ENCODE measurements at regions of chr17 and their contacts with region 1.

Region 1: GRCh38 chr17:7403977-7404736 is at the start of gene TMEM256:
- DNase-seq: peak; percentile 98
- H3K4me3 ChIP-seq: peak within 1 kb of the TSS; percentile 57 to 86 (median 62)
- H3K4me3 Mint-ChIP-seq: peak within 1 kb of the TSS; percentile 86 to 95
- H3K27ac ChIP-seq: peak within 1 kb of the TSS; percentile 59 to 70
- H3K27ac Mint-ChIP-seq: peak within 1 kb of the TSS; percentile 88 to 99 (median 97)
- H3K4me1 ChIP-seq: peaks cover 13 to 24% of the 10 kb centered on the region in 2 donors
- H3K4me1 Mint-ChIP-seq: peaks cover 21% of the 10 kb centered on the region
- H3K27me3 ChIP-seq: peaks cover 4 to 33% of the 10 kb centered on the region in 2 donors
- H3K27me3 Mint-ChIP-seq: peaks cover 33 to 41% (median 34%) of the 10 kb centered on the region in 3 donors
- CTCF ChIP-seq: no peak
- polyA plus RNA-seq, gene TMEM256: 39.2 to 81.4 (median 72.6) TPM

Region 2: GRCh38 chr17:7214300-7215135 is 189.6 kb before region 1 on chr17:
- intact Hi-C with region 1: loop called in 1 of 2 experiments (anchors 10 kb)
- DNase-seq: peak; percentile 91 to 96 (median 92)
- H3K4me3 ChIP-seq: peak overlapping the region; percentile 46 to 83 (median 62)
- H3K4me3 Mint-ChIP-seq: peak overlapping the region; percentile 89 to 90
- H3K27ac ChIP-seq: peak overlapping the region; percentile 69 to 71
- H3K27ac Mint-ChIP-seq: peak overlapping the region; percentile 91 to 100 (median 99)
- H3K4me1 ChIP-seq: peaks cover 56 to 59% of the 10 kb centered on the region in 2 donors
- H3K4me1 Mint-ChIP-seq: peaks cover 66% of the 10 kb centered on the region
- H3K27me3 ChIP-seq: no peaks in the 10 kb centered on the region
- H3K27me3 Mint-ChIP-seq: peaks cover 1 to 11% (median 3%) of the 10 kb centered on the region in 3 donors
- CTCF ChIP-seq: peak; percentile 50

Region 3: GRCh38 chr17:7252176-7253043 is 151.7 kb before region 1 on chr17 and contains the start of gene ELP5:
- intact Hi-C with region 1: loop called in 1 of 2 experiments (anchors 5 kb)
- DNase-seq: peak; percentile 88 to 96 (median 93)
- H3K4me3 ChIP-seq: peak within 1 kb of the TSS; percentile 73 to 93 (median 87)
- H3K4me3 Mint-ChIP-seq: peak within 1 kb of the TSS; percentile 90 to 95
- H3K27ac ChIP-seq: peak within 1 kb of the TSS; percentile 100
- H3K27ac Mint-ChIP-seq: peak within 1 kb of the TSS; percentile 99 to 100 (median 100)
- H3K4me1 ChIP-seq: peaks cover 31 to 36% of the 10 kb centered on the region in 2 donors
- H3K4me1 Mint-ChIP-seq: peaks cover 34% of the 10 kb centered on the region
- H3K27me3 ChIP-seq: no peaks in the 10 kb centered on the region
- H3K27me3 Mint-ChIP-seq: no peaks in the 10 kb centered on the region
- CTCF ChIP-seq: peak; percentile 28
- polyA plus RNA-seq, gene ELP5: 36.1 to 49.5 (median 44.1) TPM

Region 4: DNA sequence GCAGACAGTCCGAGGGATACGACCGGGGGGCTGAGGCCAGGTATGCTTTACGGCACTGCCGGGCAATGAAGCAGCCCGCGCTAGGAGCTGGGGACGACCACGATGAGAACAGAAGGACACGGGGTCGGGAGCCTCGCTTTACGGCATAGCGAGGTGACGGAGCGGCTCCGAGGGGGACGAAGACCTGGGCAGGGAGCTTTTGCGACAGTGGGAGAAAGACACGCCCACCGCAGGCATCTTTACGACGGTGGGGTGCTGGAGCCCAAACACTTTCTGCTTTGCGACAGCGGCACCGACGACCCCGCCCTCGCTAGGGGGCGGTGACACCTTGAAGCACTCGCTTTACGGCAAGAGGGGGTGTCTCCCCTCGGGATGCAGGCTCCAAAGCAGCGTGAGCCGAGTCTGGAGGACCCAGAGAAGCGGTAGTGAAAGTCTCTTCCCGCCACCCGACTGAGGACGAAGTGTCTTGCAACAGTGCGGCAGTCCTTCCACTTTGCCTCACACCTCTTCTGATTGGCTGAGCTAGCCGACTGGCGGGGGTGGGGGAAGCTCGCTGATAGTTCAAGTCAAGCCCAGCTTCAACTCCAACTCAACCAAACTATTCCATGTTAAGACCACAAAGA is 74.7 kb before region 1 on chr17:
- intact Hi-C with region 1: loop called in 1 of 2 experiments (anchors 2 kb)
- DNase-seq: peak; percentile 92 to 100 (median 99)
- H3K4me3 ChIP-seq: peak overlapping the region; percentile 80 to 91 (median 81)
- H3K4me3 Mint-ChIP-seq: peak overlapping the region; percentile 91 to 98
- H3K27ac ChIP-seq: peak overlapping the region; percentile 92
- H3K27ac Mint-ChIP-seq: peak overlapping the region; percentile 96 to 100 (median 98)
- H3K4me1 ChIP-seq: peaks cover 34 to 39% of the 10 kb centered on the region in 2 donors
- H3K4me1 Mint-ChIP-seq: peaks cover 36% of the 10 kb centered on the region
- H3K27me3 ChIP-seq: no peaks in the 10 kb centered on the region
- H3K27me3 Mint-ChIP-seq: peaks cover 0 to 6% (median 0%) of the 10 kb centered on the region in 3 donors
- CTCF ChIP-seq: no peak

Region 5: GRCh38 chr17:7435221-7435675 is 31.1 kb after region 1 on chr17 and contains the start of gene TMEM102:
- intact Hi-C with region 1: loop called in 1 of 2 experiments (anchors 1 kb)
- DNase-seq: peak; percentile 97 to 98 (median 98)
- H3K4me3 ChIP-seq: peak within 1 kb of the TSS; percentile 77 to 95 (median 86)
- H3K4me3 Mint-ChIP-seq: peak within 1 kb of the TSS; percentile 86 to 94
- H3K27ac ChIP-seq: peak within 1 kb of the TSS; percentile 79 to 89
- H3K27ac Mint-ChIP-seq: peak within 1 kb of the TSS; percentile 90 to 97 (median 94)
- H3K4me1 ChIP-seq: peaks cover 46 to 50% of the 10 kb centered on the region in 2 donors
- H3K4me1 Mint-ChIP-seq: peaks cover 43% of the 10 kb centered on the region
- H3K27me3 ChIP-seq: peaks cover 14 to 18% of the 10 kb centered on the region in 2 donors
- H3K27me3 Mint-ChIP-seq: peaks cover 22 to 31% (median 24%) of the 10 kb centered on the region in 3 donors
- CTCF ChIP-seq: no peak
- polyA plus RNA-seq, gene TMEM102: 5.1 to 11.3 (median 9.8) TPM